ENCODE measurements at regions of chr6 and their contacts with region 1.

Region 1: DNA sequence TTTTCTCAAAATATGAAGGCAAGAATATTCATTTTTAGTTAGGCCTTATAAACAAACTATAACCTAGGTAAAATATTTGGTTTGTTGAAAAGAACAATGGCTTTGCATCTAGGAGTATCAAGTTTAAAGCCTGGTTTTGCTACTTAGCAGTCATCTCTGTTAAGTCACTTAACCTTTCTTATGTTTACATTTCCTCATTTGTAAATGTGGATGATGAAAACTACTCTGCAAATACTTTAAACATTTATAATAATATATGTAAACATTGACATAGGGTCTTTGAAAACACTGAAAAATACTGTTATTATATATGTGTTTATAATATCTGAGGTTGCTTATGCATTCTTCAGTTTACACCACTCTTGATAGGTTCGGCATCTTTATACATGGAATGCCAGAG is 135.6 kb downstream of the CENPW start:
- DNase-seq: no peak
- H3K4me3 Mint-ChIP-seq: no peak overlapping the region
- H3K27ac Mint-ChIP-seq: no peak overlapping the region
- H3K4me1 Mint-ChIP-seq: no peaks in the 10 kb centered on the region
- H3K27me3 Mint-ChIP-seq: no peaks in the 10 kb centered on the region

Region 2: GRCh38 chr6:124517339-124517738 is 1958.1 kb before region 1 on chr6:
- intact Hi-C with region 1: no loop called
- DNase-seq: no peak
- H3K4me3 Mint-ChIP-seq: no peak overlapping the region
- H3K27ac Mint-ChIP-seq: no peak overlapping the region
- H3K4me1 Mint-ChIP-seq: no peaks in the 10 kb centered on the region
- H3K27me3 Mint-ChIP-seq: no peaks in the 10 kb centered on the region

Region 3: DNA sequence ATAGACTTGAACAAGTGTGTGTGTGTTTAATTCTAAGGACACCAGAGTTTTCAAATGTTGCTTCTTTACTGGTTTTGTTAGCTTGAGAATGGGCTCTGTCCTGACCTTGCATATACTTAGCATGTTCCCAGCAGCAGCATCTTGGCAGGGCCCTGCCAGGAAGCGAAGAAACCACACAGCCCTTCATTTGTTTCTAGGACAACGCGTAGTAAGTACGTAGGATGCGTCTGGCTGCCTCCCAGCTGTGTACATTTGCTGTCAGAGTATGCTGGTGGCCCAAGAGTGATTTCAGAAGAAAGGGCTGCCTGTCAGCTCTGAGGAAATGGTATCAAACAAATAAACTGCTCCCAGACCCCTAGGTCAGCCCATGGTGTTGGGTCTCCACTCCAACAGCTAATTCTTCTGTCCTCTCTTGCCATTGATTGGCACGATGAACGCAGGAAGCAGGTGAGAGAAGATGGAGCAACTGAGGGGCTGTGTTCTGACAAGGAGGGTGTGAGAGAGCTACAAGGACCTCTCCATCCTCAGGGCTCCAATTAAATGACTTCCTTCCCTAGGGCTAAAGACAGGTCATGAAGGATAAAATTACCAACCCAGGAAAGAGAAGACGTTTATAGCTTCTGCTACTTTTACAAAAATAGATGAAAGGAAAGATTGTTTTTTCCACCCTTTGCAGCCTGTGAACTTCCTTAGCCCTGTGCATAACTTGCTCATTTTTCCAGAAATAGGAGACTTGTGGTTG is 1117.8 kb before region 1 on chr6:
- intact Hi-C with region 1: no loop called
- DNase-seq: no peak
- H3K4me3 Mint-ChIP-seq: no peak overlapping the region
- H3K27ac Mint-ChIP-seq: no peak overlapping the region
- H3K4me1 Mint-ChIP-seq: no peaks in the 10 kb centered on the region
- H3K27me3 Mint-ChIP-seq: peaks cover 22% of the 10 kb centered on the region

Region 4: DNA sequence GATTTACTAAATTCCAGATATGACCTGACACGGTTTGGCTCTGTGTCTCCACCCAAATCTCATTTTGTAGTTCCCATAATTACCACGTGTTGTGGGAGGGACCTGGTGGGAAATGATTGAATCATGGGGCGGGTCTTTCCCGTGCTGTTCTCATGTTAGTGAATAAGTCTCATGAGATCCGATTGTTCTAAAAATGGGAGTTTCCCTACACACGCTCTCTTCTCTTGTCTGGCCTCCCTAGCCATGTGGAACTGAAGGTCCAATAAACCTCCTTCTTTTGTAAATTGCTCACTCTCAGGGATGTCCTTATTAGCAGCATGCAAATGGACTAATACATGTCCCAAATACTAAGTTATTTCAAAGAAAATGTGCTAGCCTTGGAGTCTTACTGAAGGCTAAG is 14.4 kb before region 1 on chr6:
- intact Hi-C with region 1: no loop called
- DNase-seq: no peak
- H3K4me3 Mint-ChIP-seq: no peak overlapping the region
- H3K27ac Mint-ChIP-seq: no peak overlapping the region
- H3K4me1 Mint-ChIP-seq: no peaks in the 10 kb centered on the region
- H3K27me3 Mint-ChIP-seq: no peaks in the 10 kb centered on the region

Region 5: DNA sequence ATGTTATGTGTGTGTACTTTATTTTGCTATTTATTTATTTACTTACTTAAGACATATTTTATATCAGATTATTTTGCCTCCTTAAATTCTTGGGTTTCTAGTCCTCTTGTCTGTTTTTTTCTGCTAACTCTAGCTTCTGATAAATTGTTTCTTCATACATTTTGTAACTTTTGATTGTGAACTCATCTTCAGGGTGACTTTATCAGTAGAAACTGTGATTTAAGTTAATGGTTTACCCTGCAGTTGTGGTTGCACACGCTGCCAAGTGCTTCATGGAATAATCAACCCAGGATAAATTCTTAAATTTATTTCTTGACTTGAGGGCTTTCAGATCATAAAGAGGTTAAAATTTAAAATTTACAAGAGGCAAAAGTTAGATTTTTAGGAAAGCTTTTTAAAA is 37.7 kb after region 1 on chr6:
- intact Hi-C with region 1: loop called (anchors 1 kb)
- DNase-seq: no peak
- H3K4me3 Mint-ChIP-seq: no peak overlapping the region
- H3K27ac Mint-ChIP-seq: no peak overlapping the region
- H3K4me1 Mint-ChIP-seq: no peaks in the 10 kb centered on the region
- H3K27me3 Mint-ChIP-seq: no peaks in the 10 kb centered on the region

Region 6: GRCh38 chr6:126643352-126643751 is 167.9 kb after region 1 on chr6:
- intact Hi-C with region 1: no loop called
- DNase-seq: no peak
- H3K4me3 Mint-ChIP-seq: no peak overlapping the region
- H3K27ac Mint-ChIP-seq: no peak overlapping the region
- H3K4me1 Mint-ChIP-seq: no peaks in the 10 kb centered on the region
- H3K27me3 Mint-ChIP-seq: no peaks in the 10 kb centered on the region

Measured in activated T-helper 2 cell treated with anti-CD3 and anti-CD28 coated beads, Interferon-gamma antibody, Interleukin-2, Interleukin-4, amounts not matched to agents 10 μg/mL and 5 μg/mL and 100 μg/mL, durations not matched to agents 14 hours and 24 hours and 36 hours (primary cell).